GM12878 (cell line): ENCODE measurements at regions of chr20 and their contacts with region 1.

Region 1: DNA sequence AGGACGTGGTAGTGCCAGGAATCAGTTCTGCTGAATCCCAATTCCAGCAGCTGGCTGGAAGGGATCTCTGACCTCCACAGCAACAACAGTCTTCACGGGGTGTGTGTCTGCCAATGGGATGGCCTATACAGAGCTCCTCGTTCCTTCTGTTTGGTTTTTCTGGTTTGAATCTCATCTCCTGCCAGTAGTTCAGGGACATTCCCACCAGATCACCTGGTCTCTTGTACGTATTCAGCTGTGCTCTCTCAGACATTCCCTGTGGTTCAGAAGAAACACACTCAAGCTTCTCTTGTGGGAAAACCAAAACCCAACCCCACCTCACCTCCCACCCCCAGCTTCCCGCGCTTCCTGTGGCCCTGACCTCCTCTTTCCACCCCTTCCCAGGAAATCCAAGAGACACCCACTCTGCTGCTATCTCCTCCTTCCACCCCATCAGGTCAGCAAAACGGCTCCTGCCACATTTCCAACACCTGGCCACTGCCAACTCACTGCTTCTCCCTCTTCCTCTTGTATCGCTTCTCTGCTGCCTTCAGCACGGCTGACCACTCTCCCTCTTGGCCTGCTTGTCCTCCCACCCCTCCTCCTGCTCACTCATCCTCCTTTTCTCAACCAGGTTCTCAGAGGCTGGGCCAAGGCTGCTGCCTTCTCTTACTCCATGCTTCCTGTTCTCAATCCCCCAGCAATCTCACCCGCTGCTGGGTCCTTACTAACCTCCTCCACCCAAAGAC is 63.3 kb upstream of the PTGIS start:
- DNase-seq: no peak
- ATAC-seq: peak; percentile 75
- H3K4me3 ChIP-seq: no peak overlapping the region
- H3K27ac ChIP-seq: peak overlapping the region; percentile 77
- H3K4me1 ChIP-seq: peaks cover 53% of the 10 kb centered on the region
- H3K27me3 ChIP-seq: no peaks in the 10 kb centered on the region
- CTCF ChIP-seq: no peak
- EP300 ChIP-seq: peak in 1 of 2 experiments; percentile 39; a peak in 1 of 4 replicates
- POLR2A ChIP-seq: no peak; the same call in 1 of the 2 replicates
- RAD21 ChIP-seq: no peak

Region 2: DNA sequence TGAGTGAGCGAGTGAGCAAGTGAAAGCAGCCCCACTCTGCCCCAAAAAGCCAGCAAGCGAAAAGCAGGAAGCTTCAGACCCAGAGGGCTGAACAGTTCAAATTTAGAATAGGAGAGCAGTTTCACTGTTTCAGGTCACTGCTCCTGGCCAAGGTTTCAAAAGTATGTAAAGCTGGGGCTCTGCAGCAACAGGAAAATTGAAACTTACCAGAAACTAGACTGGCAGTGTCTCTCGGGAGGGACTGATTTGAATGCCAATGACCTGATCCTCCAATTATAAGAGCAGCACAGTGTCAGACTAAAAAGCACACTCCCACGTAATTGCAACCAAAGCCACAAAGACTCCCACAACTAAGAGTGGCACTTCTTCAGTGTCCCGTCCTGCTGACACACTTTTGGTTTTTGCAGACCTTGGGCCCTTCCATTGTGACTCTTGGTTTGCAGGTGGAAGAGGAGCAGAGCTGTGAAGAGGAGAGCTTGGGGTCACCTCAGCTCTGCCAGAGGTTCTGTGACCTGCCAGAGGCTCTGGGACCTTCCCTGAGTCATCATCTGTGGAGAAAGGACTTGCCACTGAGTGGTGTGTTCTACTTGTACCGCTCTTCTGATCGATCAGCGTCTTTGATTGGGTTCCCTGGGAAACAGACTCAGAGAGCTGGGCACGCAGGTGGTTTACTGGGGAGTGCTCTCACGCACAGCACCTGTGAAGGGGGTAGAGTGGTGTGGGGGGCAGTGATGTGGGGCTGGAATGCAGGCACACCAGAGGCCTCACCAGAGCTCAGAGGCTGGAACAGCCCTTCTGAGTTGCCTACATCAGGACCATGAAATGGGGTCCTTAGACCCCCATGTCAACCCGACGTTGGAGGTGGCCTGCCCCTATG is 10.6 kb before region 1 on chr20:
- CTCF ChIA-PET with region 1: interaction called, 8 read pairs
- POLR2A ChIA-PET with region 1: interaction called, 12 read pairs
- RAD21 ChIA-PET with region 1: interaction called, 20 read pairs
- SMC1A ChIA-PET with region 1: interaction called, 45 read pairs
- in situ Hi-C with region 1: no loop called
- intact Hi-C with region 1: no loop called
- DNase-seq: peak; percentile 100
- ATAC-seq: peak; percentile 92
- H3K4me3 ChIP-seq: peak overlapping the region; percentile 8; the same call in 1 of the 2 replicates
- H3K27ac ChIP-seq: peak overlapping the region; percentile 57
- H3K4me1 ChIP-seq: peaks cover 37% of the 10 kb centered on the region
- H3K27me3 ChIP-seq: no peaks in the 10 kb centered on the region
- CTCF ChIP-seq: no peak
- EP300 ChIP-seq: peak; percentile 91 to 92
- POLR2A ChIP-seq: no peak
- RAD21 ChIP-seq: peak; percentile 17; the same call in 1 of the 2 replicates

Region 3: GRCh38 chr20:49657118-49657901 is 26.1 kb after region 1 on chr20:
- CTCF ChIA-PET with region 1: interaction called, 3 read pairs
- POLR2A ChIA-PET with region 1: interaction called, 5 read pairs
- RAD21 ChIA-PET with region 1: interaction called, 11 read pairs
- SMC1A ChIA-PET with region 1: interaction called, 6 read pairs
- in situ Hi-C with region 1: no loop called
- intact Hi-C with region 1: no loop called
- DNase-seq: no peak
- ATAC-seq: no peak
- H3K4me3 ChIP-seq: no peak overlapping the region
- H3K27ac ChIP-seq: peak overlapping the region; percentile 6; the same call in 1 of the 2 replicates
- H3K4me1 ChIP-seq: peaks cover 37% of the 10 kb centered on the region
- H3K27me3 ChIP-seq: no peaks in the 10 kb centered on the region
- CTCF ChIP-seq: no peak
- EP300 ChIP-seq: no peak
- POLR2A ChIP-seq: no peak
- RAD21 ChIP-seq: no peak

Region 4: DNA sequence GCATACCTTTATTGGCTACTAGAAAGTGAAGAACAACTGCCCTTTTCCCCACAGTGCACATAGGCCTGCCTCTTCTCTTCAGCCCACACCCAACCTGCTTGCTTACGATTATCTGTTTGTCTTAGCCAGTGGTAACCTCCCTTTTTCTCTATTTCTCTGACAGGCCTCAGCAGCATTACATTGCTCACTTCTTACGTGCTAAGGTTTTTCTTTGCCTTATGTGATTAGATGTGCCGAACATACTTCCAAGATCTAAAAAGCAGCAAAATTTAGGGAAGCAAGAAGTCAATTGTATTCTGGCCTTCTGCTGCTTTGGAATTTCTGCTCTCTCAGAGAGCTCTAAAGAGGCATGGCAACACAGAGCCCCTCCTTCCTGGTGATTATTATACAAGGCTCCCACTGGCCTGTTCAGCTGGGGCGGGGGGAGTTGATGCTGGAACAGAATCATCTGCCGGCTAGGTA is 75.4 kb after region 1 on chr20:
- CTCF ChIA-PET with region 1: interaction called, 9 read pairs
- POLR2A ChIA-PET with region 1: interaction called, 6 read pairs
- RAD21 ChIA-PET with region 1: interaction called, 8 read pairs
- SMC1A ChIA-PET with region 1: interaction called, 9 read pairs
- in situ Hi-C with region 1: no loop called
- intact Hi-C with region 1: loop called (anchors 5 kb)
- DNase-seq: no peak
- ATAC-seq: peak; percentile 32
- H3K4me3 ChIP-seq: 0 out of 2 replicates have a peak overlapping the region, but pooled peaks have one; percentile 1
- H3K27ac ChIP-seq: peak overlapping the region; percentile 67
- H3K4me1 ChIP-seq: peaks cover 15% of the 10 kb centered on the region
- H3K27me3 ChIP-seq: no peaks in the 10 kb centered on the region
- CTCF ChIP-seq: no peak
- EP300 ChIP-seq: no peak
- POLR2A ChIP-seq: no peak
- RAD21 ChIP-seq: no peak

Region 5: DNA sequence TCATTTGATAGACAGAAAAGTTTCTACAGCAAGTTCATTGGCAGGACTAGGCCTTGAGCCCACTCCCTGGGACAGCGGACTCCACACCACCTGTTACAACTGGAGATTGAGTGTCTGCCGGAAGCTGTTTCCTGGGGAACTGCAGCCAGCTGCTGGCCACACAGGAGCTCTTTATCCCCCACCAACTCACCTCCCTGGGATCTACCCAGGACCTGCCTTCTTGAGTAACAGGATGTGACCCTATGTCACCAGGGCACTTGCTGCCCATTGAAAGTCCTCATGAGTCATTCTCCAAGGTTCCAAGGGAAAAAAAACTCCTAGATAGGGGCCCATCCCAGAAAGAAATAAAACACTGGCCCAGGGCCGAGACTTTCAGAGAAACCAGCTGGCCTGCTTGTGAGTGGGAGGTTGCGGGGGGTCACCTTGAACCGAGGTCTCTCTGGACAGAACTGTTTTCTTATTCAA is 144.0 kb after region 1 on chr20:
- CTCF ChIA-PET with region 1: interaction called, 5 read pairs
- POLR2A ChIA-PET with region 1: interaction called, 6 read pairs
- RAD21 ChIA-PET with region 1: interaction called, 10 read pairs
- SMC1A ChIA-PET with region 1: interaction called, 3 read pairs
- in situ Hi-C with region 1: no loop called
- intact Hi-C with region 1: no loop called
- DNase-seq: no peak
- ATAC-seq: no peak
- H3K4me3 ChIP-seq: no peak overlapping the region
- H3K27ac ChIP-seq: no peak overlapping the region
- H3K4me1 ChIP-seq: peaks cover 11% of the 10 kb centered on the region; the same call in 1 of the 2 replicates
- H3K27me3 ChIP-seq: no peaks in the 10 kb centered on the region
- CTCF ChIP-seq: no peak
- EP300 ChIP-seq: no peak
- POLR2A ChIP-seq: no peak
- RAD21 ChIP-seq: no peak